ENCODE measurements at regions of chr12 and their contacts with region 1.

Region 1: DNA sequence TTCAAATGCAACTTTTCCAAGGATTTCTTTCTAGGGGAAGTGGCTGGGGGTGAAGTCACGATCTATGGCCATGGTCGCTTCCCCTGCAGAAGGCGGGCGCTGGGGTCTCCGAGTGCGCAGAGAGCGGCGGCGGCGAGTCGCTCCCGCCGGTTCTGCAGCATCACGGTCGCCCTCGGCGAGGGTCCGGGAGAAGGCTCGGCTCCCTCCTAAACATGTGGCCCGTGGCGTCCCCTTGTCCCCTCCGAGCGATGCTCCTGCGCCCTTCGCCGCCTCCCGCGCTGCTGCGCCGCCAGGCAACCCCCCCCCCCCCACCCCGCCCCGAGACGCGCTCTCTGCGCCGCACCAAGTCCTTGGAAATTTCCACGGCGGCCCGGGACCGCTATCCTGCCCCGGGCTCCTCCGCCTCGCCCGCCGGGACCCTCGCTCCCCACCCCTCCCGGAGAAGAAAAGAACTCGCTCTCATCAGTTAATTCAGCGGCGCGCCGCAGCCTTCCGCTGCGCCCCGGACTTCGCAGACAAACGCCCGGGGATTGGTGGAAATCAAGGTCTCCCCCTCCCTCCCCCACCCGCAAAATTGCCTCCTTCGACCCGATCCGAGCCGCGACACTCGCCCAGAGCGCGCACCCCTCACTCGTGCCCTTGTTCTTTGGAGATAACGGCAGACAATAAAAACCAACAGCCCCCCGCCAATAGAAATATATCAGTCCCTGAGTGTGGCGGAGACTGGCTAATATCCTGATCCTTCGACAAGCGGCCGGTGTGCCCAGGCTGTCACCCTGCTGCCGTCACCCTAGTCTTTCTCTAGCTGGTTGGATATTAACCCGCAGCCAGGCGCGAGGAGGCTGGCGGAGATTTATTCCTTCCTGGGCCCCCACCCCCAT is at the start of gene ST8SIA1:
- DNase-seq: peak in 4 of 5 donors; percentile 32 to 77 (median 53)
- ATAC-seq: peak; percentile 17 to 66 (median 48)
- H3K4me3 ChIP-seq: peak within 1 kb of the TSS; percentile 34 to 76 (median 66)
- H3K27ac ChIP-seq: peak within 1 kb of the TSS in 10 of 12 donors; percentile 44 to 81 (median 55)
- H3K4me1 ChIP-seq: peaks cover 0 to 14% (median 0%) of the 10 kb centered on the region in 12 donors
- H3K27me3 ChIP-seq: peaks cover 0 to 26% (median 7%) of the 10 kb centered on the region in 9 donors
- CTCF ChIP-seq: no peak
- POLR2A ChIP-seq: no peak
- total RNA-seq, gene ST8SIA1: 0.60 to 5.7 (median 1.7) TPM

Region 2: GRCh38 chr12:21559855-21560569 is 774.6 kb before region 1 on chr12:
- intact Hi-C with region 1: no loop called
- DNase-seq: no peak
- ATAC-seq: peak in 2 of 4 donors; percentile 56 to 66
- H3K4me3 ChIP-seq: no peak overlapping the region
- H3K27ac ChIP-seq: peak overlapping the region in 1 of 12 donors; percentile 47
- H3K4me1 ChIP-seq: no peaks in the 10 kb centered on the region
- H3K27me3 ChIP-seq: no peaks in the 10 kb centered on the region
- CTCF ChIP-seq: no peak
- POLR2A ChIP-seq: no peak

Region 3: GRCh38 chr12:22083167-22083566 is 251.5 kb before region 1 on chr12:
- intact Hi-C with region 1: loop called in 5 of 10 experiments (anchors 2 to 5 kb)
- DNase-seq: no peak
- ATAC-seq: no peak
- H3K4me3 ChIP-seq: no peak overlapping the region
- H3K27ac ChIP-seq: no peak overlapping the region
- H3K4me1 ChIP-seq: no peaks in the 10 kb centered on the region
- H3K27me3 ChIP-seq: no peaks in the 10 kb centered on the region
- CTCF ChIP-seq: peak; percentile 27 to 68 (median 55)
- POLR2A ChIP-seq: no peak

Region 4: DNA sequence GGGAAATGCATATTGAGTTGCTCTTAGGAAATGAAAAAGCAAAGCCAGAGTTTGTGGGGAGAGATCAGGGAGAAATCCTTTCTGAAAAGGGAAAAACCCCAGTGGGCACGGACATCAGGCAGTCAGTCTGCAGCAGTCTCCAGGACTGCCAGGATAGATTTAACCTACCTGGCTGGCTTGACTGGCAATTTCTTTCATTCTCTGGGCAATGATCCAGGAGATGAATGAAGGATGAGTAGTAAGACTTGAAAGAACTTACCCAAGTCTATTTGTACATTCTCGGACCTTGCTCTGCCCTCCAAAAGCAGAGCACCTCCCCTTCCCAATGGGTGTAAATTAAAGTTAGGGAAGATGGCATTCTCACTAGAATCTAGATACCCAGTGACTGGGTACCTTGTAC is 245.8 kb before region 1 on chr12:
- intact Hi-C with region 1: loop called in 3 of 10 experiments (anchors 5 kb)
- DNase-seq: no peak
- ATAC-seq: no peak
- H3K4me3 ChIP-seq: no peak overlapping the region
- H3K27ac ChIP-seq: no peak overlapping the region
- H3K4me1 ChIP-seq: no peaks in the 10 kb centered on the region
- H3K27me3 ChIP-seq: no peaks in the 10 kb centered on the region
- CTCF ChIP-seq: no peak
- POLR2A ChIP-seq: no peak

Region 5: GRCh38 chr12:22100958-22101748 is 233.5 kb before region 1 on chr12:
- intact Hi-C with region 1: loop called in 9 of 10 experiments (anchors 1 to 5 kb)
- DNase-seq: peak in 3 of 5 donors; percentile 26 to 42 (median 30)
- ATAC-seq: peak in 3 of 4 donors; percentile 68 to 74 (median 72)
- H3K4me3 ChIP-seq: no peak overlapping the region
- H3K27ac ChIP-seq: no peak overlapping the region
- H3K4me1 ChIP-seq: peaks cover 0 to 13% (median 0%) of the 10 kb centered on the region in 12 donors
- H3K27me3 ChIP-seq: no peaks in the 10 kb centered on the region
- CTCF ChIP-seq: peak; percentile 38 to 59 (median 53)
- POLR2A ChIP-seq: no peak

Region 6: GRCh38 chr12:22443379-22444316 is 109.0 kb after region 1 on chr12:
- intact Hi-C with region 1: loop called in 5 of 10 experiments (anchors 2 to 10 kb)
- DNase-seq: peak in 4 of 5 donors; percentile 49 to 63 (median 56)
- ATAC-seq: peak; percentile 89 to 99 (median 96)
- H3K4me3 ChIP-seq: peak overlapping the region in 1 of 12 donors; percentile 4
- H3K27ac ChIP-seq: no peak overlapping the region
- H3K4me1 ChIP-seq: peaks cover 0 to 7% (median 0%) of the 10 kb centered on the region in 12 donors
- H3K27me3 ChIP-seq: no peaks in the 10 kb centered on the region
- CTCF ChIP-seq: peak; percentile 62 to 80 (median 68)
- POLR2A ChIP-seq: no peak

Measured in heart left ventricle (tissue), 16 donors.